Right ventricle myocardium superior (tissue), 1 donor: ENCODE measurements at regions of chr16 and their contacts with region 1.

Region 1: GRCh38 chr16:54286090-54286993 is at the start of gene IRX3:
- DNase-seq: peak; percentile 93
- ATAC-seq: peak; percentile 78
- total RNA-seq, gene IRX3: 42.4 TPM

Region 2: GRCh38 chr16:53892155-53892554 is 394.2 kb before region 1 on chr16:
- intact Hi-C with region 1: loop called (anchors 10 kb)
- DNase-seq: no peak
- ATAC-seq: peak; percentile 83

Region 3: DNA sequence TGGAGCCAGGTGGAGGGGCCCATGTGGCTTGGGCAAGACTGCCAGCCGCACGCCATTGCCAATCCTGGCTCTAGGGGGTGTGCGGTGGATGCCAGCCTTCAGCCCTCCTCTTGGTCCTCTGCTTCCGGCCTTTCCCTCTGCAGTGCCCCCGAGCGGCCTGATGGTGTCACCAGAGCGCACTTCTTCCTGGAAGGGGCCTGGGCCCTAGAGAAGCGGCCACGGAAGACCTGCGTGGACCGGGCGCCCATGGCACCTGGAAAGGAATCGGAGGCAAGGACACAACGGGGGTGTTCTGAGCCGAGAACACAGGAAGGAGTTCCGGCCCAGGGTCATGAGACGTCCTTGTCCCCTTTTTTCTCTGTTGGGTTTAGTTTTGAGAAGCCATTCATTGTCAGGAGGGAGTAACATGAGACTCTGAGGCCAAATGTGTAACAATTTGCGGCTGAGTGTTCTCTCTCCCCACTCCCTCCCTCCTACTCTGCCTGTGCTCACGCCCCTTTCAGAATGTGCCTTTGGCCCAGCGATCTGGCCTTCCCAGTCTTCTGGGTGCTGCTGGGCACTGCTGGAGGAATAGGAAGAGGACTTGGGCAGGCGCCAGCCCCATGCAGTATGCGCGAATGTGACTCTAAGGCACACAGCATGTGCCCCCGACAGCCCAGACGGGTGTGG is 92.5 kb before region 1 on chr16:
- intact Hi-C with region 1: loop called (anchors 5 kb)
- DNase-seq: peak; percentile 90
- ATAC-seq: peak; percentile 91

Region 4: GRCh38 chr16:54411544-54411943 is 125.2 kb after region 1 on chr16:
- intact Hi-C with region 1: loop called (anchors 10 kb)
- DNase-seq: peak; percentile 50
- ATAC-seq: peak; percentile 55

Region 5: GRCh38 chr16:54503011-54503855 is 216.9 kb after region 1 on chr16:
- intact Hi-C with region 1: loop called (anchors 10 kb)
- DNase-seq: peak; percentile 81
- ATAC-seq: peak; percentile 94

Region 6: GRCh38 chr16:54929090-54930004 is 643.0 kb after region 1 on chr16:
- intact Hi-C with region 1: loop called (anchors 5 kb)
- DNase-seq: peak; percentile 100
- ATAC-seq: peak; percentile 92